ENCODE measurements at regions of chrX and their contacts with region 1.

Region 1: DNA sequence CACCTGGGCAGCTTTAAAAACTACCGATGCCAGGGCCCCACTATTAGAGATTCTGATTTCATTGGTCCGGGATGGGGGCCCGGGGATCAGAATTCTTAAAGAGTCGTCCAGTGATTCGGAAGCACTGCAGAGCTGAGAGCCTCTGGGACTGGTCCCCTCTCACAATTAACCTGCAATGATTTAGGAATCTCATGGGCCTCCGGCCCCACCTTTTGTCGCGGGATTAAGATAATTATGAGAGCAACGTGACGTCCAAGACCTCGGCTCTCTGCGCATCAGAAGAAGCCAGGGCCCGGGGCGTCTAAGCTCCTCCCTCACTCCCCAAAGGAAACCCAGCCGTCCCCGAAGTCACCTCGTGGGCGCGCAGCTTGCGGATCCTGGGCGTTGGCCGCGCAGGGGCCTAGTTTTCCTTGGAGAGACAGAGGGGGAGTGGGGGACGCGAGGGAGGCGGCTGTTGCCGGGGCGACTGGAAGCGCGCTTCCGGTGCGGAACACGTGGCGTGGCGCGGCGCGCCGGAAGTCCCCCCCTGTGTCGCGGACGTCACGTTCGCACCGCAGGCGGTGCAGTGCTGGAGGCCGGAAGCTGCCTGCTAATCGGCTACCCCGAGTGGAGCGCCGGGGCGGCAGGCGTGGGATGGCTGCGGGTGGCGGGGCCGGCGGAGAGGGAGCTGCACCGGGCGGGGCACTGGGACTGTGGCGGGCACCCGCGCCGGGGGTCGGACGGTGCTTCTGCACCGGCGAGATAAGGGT is at the start of gene GEMIN8:
- DNase-seq: peak; percentile 67 to 73
- ATAC-seq: peak; percentile 90
- H3K4me3 ChIP-seq: peak within 1 kb of the TSS; percentile 66 to 81 (median 77)
- H3K27ac ChIP-seq: peak within 1 kb of the TSS; percentile 74 to 90 (median 82)
- H3K4me1 ChIP-seq: peaks cover 4 to 30% of the 10 kb centered on the region in 2 donors
- H3K27me3 ChIP-seq: no peaks in the 10 kb centered on the region
- CTCF ChIP-seq: no peak
- POLR2A ChIP-seq: peak; percentile 56 to 64
- total RNA-seq, gene GEMIN8: 6.4 to 8.8 (median 6.9) TPM

Region 2: GRCh38 chrX:13506574-13506973 is 523.0 kb before region 1 on chrX:
- in situ Hi-C with region 1: loop called (anchors 5 to 10 kb)
- intact Hi-C with region 1: loop called (anchors 1 kb)
- DNase-seq: no peak
- ATAC-seq: no peak
- H3K4me3 ChIP-seq: no peak overlapping the region
- H3K27ac ChIP-seq: no peak overlapping the region
- H3K4me1 ChIP-seq: no peaks in the 10 kb centered on the region
- H3K27me3 ChIP-seq: no peaks in the 10 kb centered on the region
- CTCF ChIP-seq: peak; percentile 38 to 78 (median 51)
- POLR2A ChIP-seq: no peak

Region 3: GRCh38 chrX:13658602-13659001 is 371.0 kb before region 1 on chrX:
- in situ Hi-C with region 1: loop called (anchors 5 to 25 kb)
- intact Hi-C with region 1: loop called (anchors 1 kb)
- DNase-seq: no peak
- ATAC-seq: peak; percentile 45 to 61
- H3K4me3 ChIP-seq: no peak overlapping the region
- H3K27ac ChIP-seq: peak overlapping the region in 3 of 4 donors; percentile 15 to 57 (median 42)
- H3K4me1 ChIP-seq: peaks cover 12% of the 10 kb centered on the region in 2 donors
- H3K27me3 ChIP-seq: no peaks in the 10 kb centered on the region
- CTCF ChIP-seq: peak; percentile 48 to 66 (median 60)
- POLR2A ChIP-seq: no peak

Region 4: GRCh38 chrX:13734278-13735172 is 295.1 kb before region 1 on chrX and contains the starts of genes OFD1 and TRAPPC2:
- in situ Hi-C with region 1: loop called in 1 of 4 experiments (anchors 25 kb)
- intact Hi-C with region 1: no loop called
- DNase-seq: peak; percentile 86 to 89
- ATAC-seq: peak; percentile 99
- H3K4me3 ChIP-seq: peak within 1 kb of the TSS; percentile 72 to 94 (median 82)
- H3K27ac ChIP-seq: peak within 1 kb of the TSS; percentile 90 to 93 (median 92)
- H3K4me1 ChIP-seq: peaks cover 6 to 12% of the 10 kb centered on the region in 2 donors
- H3K27me3 ChIP-seq: no peaks in the 10 kb centered on the region
- CTCF ChIP-seq: no peak
- POLR2A ChIP-seq: peak; percentile 87 to 91
- total RNA-seq, gene OFD1: 2.8 to 8.0 (median 7.0) TPM
- total RNA-seq, gene TRAPPC2: 1.4 to 4.3 (median 2.9) TPM

Region 5: DNA sequence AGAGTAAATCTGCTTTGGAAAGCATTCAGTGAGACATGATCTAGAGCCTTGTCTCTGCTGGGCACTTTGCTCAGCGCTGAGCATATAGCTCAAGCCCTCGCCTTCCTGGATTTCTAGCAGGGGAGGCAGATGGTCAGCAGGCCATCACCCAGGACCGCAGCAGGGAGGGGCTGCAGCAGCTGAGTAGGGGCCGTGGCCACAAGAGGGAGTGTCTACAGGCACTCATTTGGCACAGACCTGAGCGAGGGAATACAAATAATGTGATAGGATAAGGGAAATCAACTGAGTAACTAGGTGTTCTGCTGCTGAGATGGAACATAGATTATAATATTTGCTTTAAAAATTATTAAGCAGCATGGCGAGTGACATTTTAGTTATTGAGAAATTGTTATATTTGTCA is 264.8 kb before region 1 on chrX:
- in situ Hi-C with region 1: loop called in 2 of 4 experiments (anchors 10 kb)
- intact Hi-C with region 1: no loop called
- DNase-seq: no peak
- ATAC-seq: no peak
- H3K4me3 ChIP-seq: no peak overlapping the region
- H3K27ac ChIP-seq: peak overlapping the region; percentile 18 to 66 (median 61)
- H3K4me1 ChIP-seq: no peaks in the 10 kb centered on the region
- H3K27me3 ChIP-seq: no peaks in the 10 kb centered on the region
- CTCF ChIP-seq: peak in 1 of 5 experiments; percentile 18
- POLR2A ChIP-seq: no peak

Region 6: DNA sequence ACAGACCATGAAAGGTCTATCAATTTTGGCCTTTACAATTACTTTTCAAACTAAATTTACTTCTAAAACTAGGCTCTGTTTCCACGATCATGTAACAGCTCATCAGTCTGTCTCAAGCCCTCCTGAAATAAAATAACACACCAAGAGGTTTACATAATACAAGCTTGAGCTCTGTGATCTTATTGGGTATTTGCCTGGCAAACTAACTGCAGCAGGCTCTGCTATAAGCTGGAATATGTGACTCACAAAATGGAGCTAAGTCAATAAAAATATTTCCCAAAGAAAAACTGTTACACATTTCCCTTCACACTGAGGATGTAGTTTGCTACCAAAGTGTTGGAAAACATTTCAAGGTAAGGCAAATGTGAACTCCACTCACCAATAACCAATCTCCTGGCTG is 118.0 kb before region 1 on chrX:
- in situ Hi-C with region 1: no loop called
- intact Hi-C with region 1: no loop called
- DNase-seq: no peak
- ATAC-seq: no peak
- H3K4me3 ChIP-seq: no peak overlapping the region
- H3K27ac ChIP-seq: no peak overlapping the region
- H3K4me1 ChIP-seq: no peaks in the 10 kb centered on the region
- H3K27me3 ChIP-seq: no peaks in the 10 kb centered on the region
- CTCF ChIP-seq: no peak
- POLR2A ChIP-seq: no peak

Region 7: DNA sequence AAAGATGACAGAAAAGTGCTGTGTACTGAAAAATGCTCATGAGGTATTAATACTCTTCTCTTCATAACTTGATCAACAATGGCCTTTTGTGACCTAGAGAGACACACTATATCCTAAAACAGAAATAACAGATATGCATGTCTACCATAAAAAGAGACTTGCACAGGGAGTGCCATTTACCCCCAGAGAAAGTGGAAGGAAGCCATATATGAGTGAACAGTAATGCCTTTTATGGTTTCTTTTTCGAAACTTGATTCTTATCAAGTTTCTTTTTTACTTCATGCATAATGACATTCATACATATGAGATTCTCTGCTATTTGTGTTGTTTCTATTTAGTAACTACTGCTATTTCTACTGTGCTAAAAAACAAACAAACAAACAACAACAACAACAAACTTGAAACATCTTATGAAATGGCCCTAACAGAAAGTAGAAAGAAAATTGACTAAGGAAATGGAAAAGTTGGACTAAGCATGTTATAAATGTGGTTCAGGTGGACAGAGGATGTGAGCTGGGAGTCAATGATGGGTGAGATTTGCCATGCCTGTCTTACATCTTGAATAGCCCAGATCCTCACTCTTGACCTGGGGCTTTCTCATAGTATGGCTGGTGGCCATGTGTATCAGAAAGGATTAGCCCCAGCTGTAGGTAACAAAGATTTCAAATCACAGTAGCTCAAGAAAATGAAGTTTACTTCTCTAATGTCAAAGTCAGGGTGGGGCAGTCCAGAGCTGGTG is 43.7 kb before region 1 on chrX:
- in situ Hi-C with region 1: no loop called
- intact Hi-C with region 1: no loop called
- DNase-seq: no peak
- ATAC-seq: no peak
- H3K4me3 ChIP-seq: no peak overlapping the region
- H3K27ac ChIP-seq: no peak overlapping the region
- H3K4me1 ChIP-seq: no peaks in the 10 kb centered on the region
- H3K27me3 ChIP-seq: no peaks in the 10 kb centered on the region
- CTCF ChIP-seq: no peak
- POLR2A ChIP-seq: no peak

Region 8: GRCh38 chrX:14872851-14873675 is 843.5 kb after region 1 on chrX and contains the starts of genes FANCB and MOSPD2:
- in situ Hi-C with region 1: no loop called
- intact Hi-C with region 1: loop called (anchors 5 kb)
- DNase-seq: peak; percentile 80 to 92
- ATAC-seq: peak; percentile 95 to 96
- H3K4me3 ChIP-seq: peak within 1 kb of the TSS; percentile 60 to 82 (median 72)
- H3K27ac ChIP-seq: peak within 1 kb of the TSS; percentile 76 to 87 (median 86)
- H3K4me1 ChIP-seq: no peaks in the 10 kb centered on the region
- H3K27me3 ChIP-seq: no peaks in the 10 kb centered on the region
- CTCF ChIP-seq: no peak
- POLR2A ChIP-seq: peak; percentile 13 to 33
- total RNA-seq, gene FANCB: 0.11 to 0.41 (median 0.16) TPM in 3 of 4 donors, not detected in the other
- total RNA-seq, gene MOSPD2: 2.8 to 11.0 (median 3.3) TPM

Region 9: GRCh38 chrX:15242899-15243555 is 1213.4 kb after region 1 on chrX:
- in situ Hi-C with region 1: loop called in 1 of 4 experiments (anchors 25 kb)
- intact Hi-C with region 1: no loop called
- DNase-seq: no peak
- ATAC-seq: no peak
- H3K4me3 ChIP-seq: no peak overlapping the region
- H3K27ac ChIP-seq: no peak overlapping the region
- H3K4me1 ChIP-seq: no peaks in the 10 kb centered on the region
- H3K27me3 ChIP-seq: peaks cover 0 to 5% (median 0%) of the 10 kb centered on the region in 3 donors
- CTCF ChIP-seq: peak in 2 of 5 experiments; percentile 20 to 46
- POLR2A ChIP-seq: no peak

Measured in gastrocnemius medialis (tissue), 4 donors.